Activated B cell treated with CpG ODN at 0.5 μM for 24 hours (primary cell): ENCODE measurements at regions of chr11 and their contacts with region 1.

Region 1: GRCh38 chr11:95705485-95706124 is 84.0 kb downstream of the FAM76B start:
- DNase-seq: peak; percentile 61
- ATAC-seq: peak; percentile 93
- H3K4me3 Mint-ChIP-seq: no peak overlapping the region
- H3K27ac Mint-ChIP-seq: no peak overlapping the region
- H3K4me1 Mint-ChIP-seq: peaks cover 26% of the 10 kb centered on the region
- H3K27me3 Mint-ChIP-seq: no peaks in the 10 kb centered on the region
- CTCF ChIP-seq: peak; percentile 93

Region 2: GRCh38 chr11:95212609-95213008 is 493.0 kb before region 1 on chr11:
- CTCF ChIA-PET with region 1: interaction called, 13 read pairs
- POLR2A ChIA-PET with region 1: no interaction called
- intact Hi-C with region 1: no loop called
- DNase-seq: no peak
- ATAC-seq: no peak
- H3K4me3 Mint-ChIP-seq: no peak overlapping the region
- H3K27ac Mint-ChIP-seq: no peak overlapping the region
- H3K4me1 Mint-ChIP-seq: peaks cover 39% of the 10 kb centered on the region
- H3K27me3 Mint-ChIP-seq: no peaks in the 10 kb centered on the region
- CTCF ChIP-seq: no peak

Region 3: GRCh38 chr11:95296621-95297025 is 409.0 kb before region 1 on chr11:
- CTCF ChIA-PET with region 1: interaction called, 6 read pairs
- POLR2A ChIA-PET with region 1: interaction called, 10 read pairs
- intact Hi-C with region 1: loop called (anchors 2 kb)
- DNase-seq: peak; percentile 41
- ATAC-seq: peak; percentile 89
- H3K4me3 Mint-ChIP-seq: peak overlapping the region; percentile 79
- H3K27ac Mint-ChIP-seq: peak overlapping the region; percentile 89
- H3K4me1 Mint-ChIP-seq: peaks cover 50% of the 10 kb centered on the region
- H3K27me3 Mint-ChIP-seq: no peaks in the 10 kb centered on the region
- CTCF ChIP-seq: no peak

Region 4: DNA sequence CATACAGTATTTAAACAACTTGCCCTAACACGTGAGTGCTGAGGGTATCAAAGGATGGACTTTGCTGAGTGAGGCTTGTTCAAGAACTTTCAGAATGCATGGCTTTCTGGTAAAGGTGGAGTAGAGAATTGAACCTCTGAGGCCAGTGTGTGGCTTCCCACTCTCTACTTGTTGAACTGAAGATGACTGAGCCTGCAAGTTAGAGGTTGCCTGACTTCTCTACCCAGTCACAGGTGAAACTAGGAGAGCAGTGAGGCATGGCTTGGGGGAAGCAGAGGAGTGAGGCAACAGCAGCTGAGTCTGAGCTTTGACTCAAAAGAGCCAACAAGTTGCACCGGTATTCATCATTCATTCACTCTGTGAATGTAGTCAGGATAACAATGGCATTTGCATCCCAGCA is 218.2 kb before region 1 on chr11:
- CTCF ChIA-PET with region 1: no interaction called
- POLR2A ChIA-PET with region 1: interaction called, 3 read pairs
- intact Hi-C with region 1: loop called (anchors 5 kb)
- DNase-seq: peak; percentile 26
- ATAC-seq: peak; percentile 100
- H3K4me3 Mint-ChIP-seq: no peak overlapping the region
- H3K27ac Mint-ChIP-seq: peak overlapping the region; percentile 84
- H3K4me1 Mint-ChIP-seq: peaks cover 14% of the 10 kb centered on the region
- H3K27me3 Mint-ChIP-seq: no peaks in the 10 kb centered on the region
- CTCF ChIP-seq: no peak

Region 5: DNA sequence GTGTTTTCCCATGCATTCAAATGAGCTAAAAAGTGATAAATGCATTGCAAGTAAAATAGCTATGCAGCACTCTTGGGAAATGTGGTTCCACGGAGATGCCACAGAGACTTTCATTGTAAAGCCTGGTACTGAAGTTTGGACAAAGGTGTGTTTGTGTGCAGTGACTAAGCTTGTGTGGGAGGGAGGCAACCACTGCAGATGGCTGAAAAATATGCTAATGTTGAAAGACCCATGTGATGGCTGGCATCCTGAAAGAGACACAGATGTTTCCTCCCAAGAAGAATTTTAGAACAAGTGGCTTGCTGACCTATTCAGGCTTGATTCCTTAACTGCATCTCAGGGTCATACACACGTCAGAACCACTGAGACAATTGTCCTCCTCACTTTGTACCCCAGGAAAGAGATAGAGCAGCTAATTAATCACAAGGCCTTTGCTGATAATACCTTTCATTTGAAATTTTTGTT is 10.2 kb after region 1 on chr11:
- CTCF ChIA-PET with region 1: interaction called, 34 read pairs
- POLR2A ChIA-PET with region 1: interaction called, 39 read pairs
- intact Hi-C with region 1: loop called (anchors 1 kb)
- DNase-seq: peak; percentile 39
- ATAC-seq: peak; percentile 78
- H3K4me3 Mint-ChIP-seq: peak overlapping the region; percentile 75
- H3K27ac Mint-ChIP-seq: peak overlapping the region; percentile 95
- H3K4me1 Mint-ChIP-seq: peaks cover 92% of the 10 kb centered on the region
- H3K27me3 Mint-ChIP-seq: no peaks in the 10 kb centered on the region
- CTCF ChIP-seq: no peak

Region 6: DNA sequence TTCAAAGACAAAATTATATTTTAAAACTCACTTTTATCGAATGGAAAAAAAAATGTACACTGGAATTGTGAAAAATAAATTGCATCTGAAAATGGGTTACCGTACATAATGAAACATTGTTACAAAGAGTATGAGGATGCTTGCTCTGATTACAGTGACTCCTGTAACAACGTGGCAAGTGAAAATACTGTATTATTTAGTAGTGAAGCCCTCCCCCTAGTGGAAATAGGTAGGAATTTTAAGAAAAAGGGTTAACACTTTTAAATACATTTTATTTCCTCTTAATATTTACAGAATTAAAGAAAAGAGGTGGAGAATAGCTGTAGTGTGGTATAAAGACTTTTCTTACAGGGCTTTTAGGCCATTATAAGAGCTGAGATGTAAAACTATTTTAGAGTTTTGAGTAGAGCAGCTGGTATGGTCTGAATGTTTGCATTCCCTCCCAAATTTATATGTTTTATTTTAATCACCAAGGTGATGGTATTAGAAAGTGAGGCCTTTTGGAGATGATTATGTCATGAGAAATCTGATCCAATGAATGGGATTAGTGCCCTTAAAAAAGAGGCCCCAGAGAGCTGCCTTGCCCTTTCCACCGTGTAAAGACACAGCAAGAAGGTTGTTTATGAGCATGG is 58.8 kb after region 1 on chr11:
- CTCF ChIA-PET with region 1: interaction called, 60 read pairs
- POLR2A ChIA-PET with region 1: interaction called, 4 read pairs
- intact Hi-C with region 1: loop called (anchors 1 kb)
- DNase-seq: no peak
- ATAC-seq: peak; percentile 69
- H3K4me3 Mint-ChIP-seq: no peak overlapping the region
- H3K27ac Mint-ChIP-seq: no peak overlapping the region
- H3K4me1 Mint-ChIP-seq: peaks cover 23% of the 10 kb centered on the region
- H3K27me3 Mint-ChIP-seq: no peaks in the 10 kb centered on the region
- CTCF ChIP-seq: no peak

Region 7: GRCh38 chr11:95985174-95985808 is 279.7 kb after region 1 on chr11:
- CTCF ChIA-PET with region 1: no interaction called
- POLR2A ChIA-PET with region 1: no interaction called
- intact Hi-C with region 1: no loop called
- DNase-seq: no peak
- ATAC-seq: no peak
- H3K4me3 Mint-ChIP-seq: no peak overlapping the region
- H3K27ac Mint-ChIP-seq: no peak overlapping the region
- H3K4me1 Mint-ChIP-seq: no peaks in the 10 kb centered on the region
- H3K27me3 Mint-ChIP-seq: no peaks in the 10 kb centered on the region
- CTCF ChIP-seq: no peak